Activated naive CD4-positive, alpha-beta T cell treated with anti-CD3 and anti-CD28 coated beads for 36 hours (primary cell): ENCODE measurements at regions of chr14 and their contacts with region 1.

Region 1: GRCh38 chr14:24160850-24161804 is at the start of gene IRF9:
- DNase-seq: peak; percentile 99
- H3K4me3 Mint-ChIP-seq: peak within 1 kb of the TSS; percentile 99
- H3K27ac Mint-ChIP-seq: peak within 1 kb of the TSS; percentile 100
- H3K4me1 Mint-ChIP-seq: peaks cover 43% of the 10 kb centered on the region
- H3K27me3 Mint-ChIP-seq: no peaks in the 10 kb centered on the region
- total RNA-seq, gene IRF9: 202 to 212 TPM

Region 2: DNA sequence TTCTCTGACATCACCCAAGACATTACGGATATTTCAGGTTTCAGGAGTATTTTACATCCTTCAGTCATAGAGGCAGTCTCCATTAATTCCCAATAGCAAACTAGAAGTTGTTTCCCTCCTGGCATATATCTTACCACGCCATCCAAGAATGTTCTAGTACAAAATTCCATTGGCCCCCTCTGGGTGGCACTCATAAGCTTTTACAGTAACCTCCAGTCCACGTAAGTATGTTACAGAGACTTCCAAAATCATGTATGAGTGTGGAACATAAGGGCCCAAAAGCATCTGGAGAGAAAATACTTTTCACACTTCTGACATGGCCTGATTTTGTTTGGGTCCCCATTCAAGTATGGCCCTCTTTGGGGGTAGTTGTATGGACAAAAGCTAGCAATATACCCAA is 265.6 kb before region 1 on chr14:
- CTCF ChIA-PET with region 1: no interaction called
- intact Hi-C with region 1: no loop called
- DNase-seq: no peak
- H3K4me3 Mint-ChIP-seq: no peak overlapping the region
- H3K27ac Mint-ChIP-seq: no peak overlapping the region
- H3K4me1 Mint-ChIP-seq: no peaks in the 10 kb centered on the region
- H3K27me3 Mint-ChIP-seq: no peaks in the 10 kb centered on the region

Region 3: GRCh38 chr14:24013654-24014514 is 147.2 kb before region 1 on chr14:
- CTCF ChIA-PET with region 1: no interaction called
- intact Hi-C with region 1: loop called (anchors 1 kb)
- DNase-seq: peak; percentile 66
- H3K4me3 Mint-ChIP-seq: no peak overlapping the region
- H3K27ac Mint-ChIP-seq: no peak overlapping the region
- H3K4me1 Mint-ChIP-seq: peaks cover 25% of the 10 kb centered on the region
- H3K27me3 Mint-ChIP-seq: no peaks in the 10 kb centered on the region

Region 4: GRCh38 chr14:24042746-24043145 is 118.4 kb before region 1 on chr14:
- CTCF ChIA-PET with region 1: no interaction called
- intact Hi-C with region 1: no loop called
- DNase-seq: no peak
- H3K4me3 Mint-ChIP-seq: no peak overlapping the region
- H3K27ac Mint-ChIP-seq: no peak overlapping the region
- H3K4me1 Mint-ChIP-seq: no peaks in the 10 kb centered on the region
- H3K27me3 Mint-ChIP-seq: no peaks in the 10 kb centered on the region

Region 5: GRCh38 chr14:24086193-24086955 is 74.8 kb before region 1 on chr14:
- CTCF ChIA-PET with region 1: interaction called, 7 read pairs
- intact Hi-C with region 1: loop called (anchors 1 kb)
- DNase-seq: no peak
- H3K4me3 Mint-ChIP-seq: no peak overlapping the region
- H3K27ac Mint-ChIP-seq: no peak overlapping the region
- H3K4me1 Mint-ChIP-seq: peaks cover 7% of the 10 kb centered on the region
- H3K27me3 Mint-ChIP-seq: no peaks in the 10 kb centered on the region

Region 6: DNA sequence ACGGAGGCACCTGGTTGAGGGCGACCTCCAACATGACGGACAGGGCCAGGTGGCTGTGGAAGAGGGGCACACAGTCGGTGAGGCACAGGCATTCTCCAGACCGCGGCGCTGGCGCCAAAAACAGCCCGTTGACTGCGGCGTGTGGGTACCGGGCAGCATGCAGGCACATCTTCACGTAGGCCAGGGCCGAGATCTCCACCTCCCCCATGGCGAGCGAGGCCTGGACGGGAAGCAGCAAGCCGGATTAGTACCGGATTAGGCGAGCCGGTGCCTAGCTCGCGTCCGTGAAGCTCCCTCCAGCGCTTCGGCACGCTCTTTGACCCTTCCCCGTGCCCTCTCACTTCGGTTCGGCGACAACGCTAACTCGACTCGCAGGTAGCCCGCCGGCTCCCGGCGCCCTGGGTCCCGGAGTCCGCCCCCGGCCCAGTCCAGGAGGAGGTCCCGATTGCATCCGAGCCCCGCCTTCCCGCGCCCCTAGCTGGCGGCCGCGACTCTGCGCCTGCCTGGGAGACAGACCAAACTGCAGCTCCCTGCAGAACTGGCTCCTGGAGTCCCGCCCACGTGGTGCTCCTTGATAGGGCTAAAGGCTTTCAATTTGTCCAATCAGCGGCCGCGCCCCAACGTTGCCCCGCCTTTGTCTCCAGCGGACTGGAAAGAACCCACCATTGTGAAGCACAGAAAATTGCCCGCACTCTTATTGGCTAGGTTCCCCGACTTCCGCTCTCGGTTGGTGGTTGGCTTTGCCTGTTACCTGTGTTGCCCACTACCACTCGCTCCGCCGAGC is 19.8 kb before region 1 on chr14 and contains the start of gene EMC9:
- CTCF ChIA-PET with region 1: interaction called, 63 read pairs
- intact Hi-C with region 1: loop called (anchors 1 kb)
- DNase-seq: peak; percentile 100
- H3K4me3 Mint-ChIP-seq: peak within 1 kb of the TSS; percentile 99
- H3K27ac Mint-ChIP-seq: peak within 1 kb of the TSS; percentile 93
- H3K4me1 Mint-ChIP-seq: peaks cover 73% of the 10 kb centered on the region
- H3K27me3 Mint-ChIP-seq: no peaks in the 10 kb centered on the region
- total RNA-seq, gene EMC9: 38.4 to 38.9 TPM

Region 7: DNA sequence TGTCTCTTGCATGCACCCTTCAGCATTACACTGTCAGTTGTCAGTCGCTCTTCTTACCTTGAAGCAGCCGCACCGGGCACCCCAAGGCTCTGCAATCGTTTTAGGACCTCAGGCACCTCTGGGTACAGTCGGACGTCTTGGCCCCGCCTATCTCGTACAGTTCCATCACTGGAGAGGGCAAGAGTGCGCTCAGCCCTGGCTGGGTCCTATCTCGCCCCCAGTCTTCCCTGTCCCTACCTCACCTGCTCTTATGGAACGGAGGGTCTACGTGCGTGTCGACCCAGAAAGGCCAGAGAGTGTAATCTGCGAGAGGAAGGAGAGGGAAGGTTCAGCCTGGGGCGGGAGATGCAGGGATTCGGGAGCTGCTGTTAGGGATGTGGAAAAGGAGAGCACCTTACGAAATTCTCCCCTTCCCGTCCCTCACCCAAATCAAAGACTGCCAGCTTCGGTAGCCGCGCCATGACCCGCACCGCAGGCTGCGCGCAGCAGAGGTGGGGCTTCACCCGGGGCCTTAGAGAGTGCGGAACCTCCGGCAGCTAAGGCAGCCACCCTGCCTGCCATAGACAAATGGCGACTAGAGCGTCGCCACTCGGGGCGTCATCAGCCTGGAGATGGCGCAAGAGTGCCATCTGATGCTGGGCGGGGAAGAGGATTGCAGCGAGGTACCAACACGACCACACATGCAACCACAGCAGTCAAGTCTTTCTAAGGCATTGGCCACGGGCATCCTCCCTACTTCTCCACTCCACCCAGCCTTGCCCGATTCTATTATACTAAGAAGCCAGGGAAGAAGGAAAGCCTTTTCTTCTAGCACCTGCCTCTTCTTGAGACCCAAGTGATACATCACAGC is 54.6 kb after region 1 on chr14 and contains the start of gene MDP1:
- CTCF ChIA-PET with region 1: interaction called, 7 read pairs
- intact Hi-C with region 1: loop called (anchors 1 kb)
- DNase-seq: peak; percentile 93
- H3K4me3 Mint-ChIP-seq: peak within 1 kb of the TSS; percentile 86
- H3K27ac Mint-ChIP-seq: peak within 1 kb of the TSS; percentile 96
- H3K4me1 Mint-ChIP-seq: peaks cover 45% of the 10 kb centered on the region
- H3K27me3 Mint-ChIP-seq: no peaks in the 10 kb centered on the region
- total RNA-seq, gene MDP1: 10.2 to 13.6 TPM

Region 8: DNA sequence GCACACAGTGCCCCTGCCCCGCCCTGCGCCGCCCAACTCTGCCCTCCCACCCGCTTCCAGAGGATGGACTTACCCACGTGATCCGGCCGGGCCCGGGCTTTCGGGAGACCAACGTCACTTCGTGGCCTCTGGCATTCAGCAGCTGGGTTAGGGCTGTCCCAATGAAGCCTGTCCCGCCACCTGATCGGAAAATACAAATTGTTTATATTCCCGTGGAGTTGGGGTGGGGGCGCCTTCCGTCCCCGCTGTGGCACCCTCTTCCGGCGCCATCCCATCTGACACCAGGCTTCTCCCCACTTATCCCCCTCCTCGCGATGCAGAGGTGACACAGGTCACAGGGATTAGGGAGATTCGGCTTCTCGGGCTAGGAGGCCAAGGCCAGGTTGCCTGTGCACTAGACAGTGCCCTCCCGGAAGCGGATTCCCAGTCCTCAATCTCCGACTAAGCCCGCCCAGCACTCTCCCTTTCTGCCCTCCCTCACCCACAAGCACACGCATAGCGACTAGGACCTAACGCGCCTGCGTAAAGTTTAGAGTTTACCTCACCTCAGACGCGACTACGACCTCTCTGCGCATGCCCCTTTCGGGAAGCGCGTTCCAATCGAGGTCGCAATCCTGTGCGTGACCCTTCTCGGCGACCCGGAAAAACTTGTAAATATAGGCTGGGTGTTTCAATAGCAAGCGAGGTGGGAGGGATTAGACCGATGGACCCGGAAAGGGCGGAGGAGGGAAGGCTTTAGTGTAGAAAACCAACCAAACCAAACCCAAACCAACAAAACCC is 281.3 kb after region 1 on chr14 and contains the start of gene SDR39U1:
- CTCF ChIA-PET with region 1: no interaction called
- intact Hi-C with region 1: loop called (anchors 1 kb)
- DNase-seq: peak; percentile 99
- H3K4me3 Mint-ChIP-seq: peak within 1 kb of the TSS; percentile 89
- H3K27ac Mint-ChIP-seq: peak within 1 kb of the TSS; percentile 98
- H3K4me1 Mint-ChIP-seq: peaks cover 39% of the 10 kb centered on the region
- H3K27me3 Mint-ChIP-seq: no peaks in the 10 kb centered on the region
- total RNA-seq, gene SDR39U1: 70.5 to 72.4 TPM